ENCODE measurements at regions of chr2 and their contacts with region 1.

Region 1: GRCh38 chr2:152717228-152718075 is at the start of gene PRPF40A:
- DNase-seq: peak; percentile 99
- ATAC-seq: peak; percentile 74
- H3K4me3 ChIP-seq: peak within 1 kb of the TSS; percentile 72 to 97 (median 93)
- H3K4me3 Mint-ChIP-seq: peak within 1 kb of the TSS; percentile 94
- H3K27ac ChIP-seq: peak within 1 kb of the TSS; percentile 94 to 96
- H3K27ac Mint-ChIP-seq: peak within 1 kb of the TSS; percentile 95
- H3K4me1 ChIP-seq: peaks cover 26 to 30% of the 10 kb centered on the region in 2 donors
- H3K4me1 Mint-ChIP-seq: peaks cover 46% of the 10 kb centered on the region
- H3K27me3 ChIP-seq: no peaks in the 10 kb centered on the region
- H3K27me3 Mint-ChIP-seq: no peaks in the 10 kb centered on the region
- CTCF ChIP-seq: no peak
- total RNA-seq, gene PRPF40A: 115 and 121 TPM in 2 replicates

Region 2: GRCh38 chr2:151261231-151261976 is 1456.0 kb before region 1 on chr2 and contains the start of gene RBM43:
- CTCF ChIA-PET with region 1: no interaction called
- POLR2A ChIA-PET with region 1: interaction called, 3 read pairs
- intact Hi-C with region 1: loop called (anchors 1 kb)
- DNase-seq: peak; percentile 86
- ATAC-seq: peak; percentile 84
- H3K4me3 ChIP-seq: peak within 1 kb of the TSS; percentile 78 to 96 (median 85)
- H3K4me3 Mint-ChIP-seq: peak within 1 kb of the TSS; percentile 94
- H3K27ac ChIP-seq: peak within 1 kb of the TSS; percentile 88 to 91
- H3K27ac Mint-ChIP-seq: peak within 1 kb of the TSS; percentile 87
- H3K4me1 ChIP-seq: peaks cover 11 to 12% of the 10 kb centered on the region in 2 donors
- H3K4me1 Mint-ChIP-seq: peaks cover 23% of the 10 kb centered on the region
- H3K27me3 ChIP-seq: no peaks in the 10 kb centered on the region
- H3K27me3 Mint-ChIP-seq: no peaks in the 10 kb centered on the region
- CTCF ChIP-seq: no peak
- total RNA-seq, gene RBM43: 8.4 and 9.0 TPM in 2 replicates

Region 3: GRCh38 chr2:151437630-151438029 is 1279.8 kb before region 1 on chr2:
- CTCF ChIA-PET with region 1: no interaction called
- POLR2A ChIA-PET with region 1: no interaction called
- intact Hi-C with region 1: no loop called
- DNase-seq: peak; percentile 44
- ATAC-seq: peak; percentile 28
- H3K4me3 ChIP-seq: no peak overlapping the region
- H3K4me3 Mint-ChIP-seq: no peak overlapping the region
- H3K27ac ChIP-seq: no peak overlapping the region
- H3K27ac Mint-ChIP-seq: peak overlapping the region; percentile 1
- H3K4me1 ChIP-seq: no peaks in the 10 kb centered on the region
- H3K4me1 Mint-ChIP-seq: no peaks in the 10 kb centered on the region
- H3K27me3 ChIP-seq: no peaks in the 10 kb centered on the region
- H3K27me3 Mint-ChIP-seq: no peaks in the 10 kb centered on the region
- CTCF ChIP-seq: peak; percentile 86

Region 4: DNA sequence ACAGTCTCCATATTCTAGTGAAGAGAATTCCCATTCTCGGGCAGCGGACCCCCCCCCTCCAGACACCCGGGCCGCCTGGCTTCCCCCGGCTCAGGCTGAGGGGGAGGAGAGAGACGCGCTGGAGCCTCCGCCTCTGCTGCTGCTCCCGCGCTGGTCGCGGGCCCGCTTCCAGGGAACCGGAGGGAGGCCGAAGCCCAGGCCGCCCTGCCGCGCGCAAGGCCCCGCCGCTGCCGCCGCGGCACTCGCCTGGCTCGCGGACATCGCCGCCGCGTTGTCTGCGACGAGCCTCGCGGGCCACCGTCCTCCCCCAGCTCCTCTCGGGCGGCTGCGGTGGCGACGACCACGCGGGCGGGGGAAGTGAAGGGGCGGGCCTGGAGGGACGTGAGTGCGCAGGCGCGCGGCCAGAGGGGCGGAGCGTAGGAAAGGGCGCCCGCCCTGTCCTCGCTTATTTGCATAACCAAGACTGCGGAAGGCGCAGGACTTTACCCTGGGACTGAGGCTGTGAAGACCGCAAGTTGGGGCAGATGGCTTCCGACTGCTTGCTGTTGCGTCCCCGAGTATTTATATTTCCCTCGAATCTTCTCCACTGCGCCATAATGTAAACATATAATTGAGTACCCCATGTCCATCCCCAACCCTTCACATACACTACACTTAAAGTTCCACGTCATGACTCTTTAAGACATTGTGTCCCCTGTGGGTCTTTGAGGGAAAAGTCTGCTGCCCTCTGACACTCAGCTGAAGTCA is 889.1 kb before region 1 on chr2 and contains the start of gene ARL5A:
- CTCF ChIA-PET with region 1: no interaction called
- POLR2A ChIA-PET with region 1: interaction called, 6 read pairs
- intact Hi-C with region 1: loop called (anchors 1 kb)
- DNase-seq: peak; percentile 99
- ATAC-seq: peak; percentile 93
- H3K4me3 ChIP-seq: peak within 1 kb of the TSS; percentile 69 to 98 (median 94)
- H3K4me3 Mint-ChIP-seq: peak within 1 kb of the TSS; percentile 86
- H3K27ac ChIP-seq: peak within 1 kb of the TSS; percentile 76 to 87
- H3K27ac Mint-ChIP-seq: peak within 1 kb of the TSS; percentile 93
- H3K4me1 ChIP-seq: peaks cover 20 to 29% of the 10 kb centered on the region in 2 donors
- H3K4me1 Mint-ChIP-seq: peaks cover 51% of the 10 kb centered on the region
- H3K27me3 ChIP-seq: no peaks in the 10 kb centered on the region
- H3K27me3 Mint-ChIP-seq: no peaks in the 10 kb centered on the region
- CTCF ChIP-seq: no peak
- total RNA-seq, gene ARL5A: 54.1 and 60.5 TPM in 2 replicates

Region 5: GRCh38 chr2:152175458-152176325 is 541.8 kb before region 1 on chr2 and contains the start of gene STAM2:
- CTCF ChIA-PET with region 1: interaction called, 6 read pairs
- POLR2A ChIA-PET with region 1: interaction called, 10 read pairs
- intact Hi-C with region 1: loop called (anchors 1 kb)
- DNase-seq: peak; percentile 96
- ATAC-seq: peak; percentile 84
- H3K4me3 ChIP-seq: peak within 1 kb of the TSS; percentile 95 to 99 (median 97)
- H3K4me3 Mint-ChIP-seq: peak within 1 kb of the TSS; percentile 95
- H3K27ac ChIP-seq: peak within 1 kb of the TSS; percentile 95 to 99
- H3K27ac Mint-ChIP-seq: peak within 1 kb of the TSS; percentile 100
- H3K4me1 ChIP-seq: peaks cover 17 to 26% of the 10 kb centered on the region in 2 donors
- H3K4me1 Mint-ChIP-seq: peaks cover 32% of the 10 kb centered on the region
- H3K27me3 ChIP-seq: no peaks in the 10 kb centered on the region
- H3K27me3 Mint-ChIP-seq: peaks cover 2% of the 10 kb centered on the region
- CTCF ChIP-seq: peak; percentile 98
- total RNA-seq, gene STAM2: 24.6 and 30.2 TPM in 2 replicates

Region 6: GRCh38 chr2:152466980-152467676 is 250.3 kb before region 1 on chr2:
- CTCF ChIA-PET with region 1: no interaction called
- POLR2A ChIA-PET with region 1: no interaction called
- intact Hi-C with region 1: no loop called
- DNase-seq: peak; percentile 47
- ATAC-seq: peak; percentile 86
- H3K4me3 ChIP-seq: peak overlapping the region in 2 of 5 experiments; percentile 5 to 10
- H3K4me3 Mint-ChIP-seq: peak overlapping the region; percentile 69
- H3K27ac ChIP-seq: peak overlapping the region in 1 of 2 donors; percentile 31
- H3K27ac Mint-ChIP-seq: peak overlapping the region; percentile 85
- H3K4me1 ChIP-seq: peaks cover 28 to 39% of the 10 kb centered on the region in 2 donors
- H3K4me1 Mint-ChIP-seq: peaks cover 53% of the 10 kb centered on the region
- H3K27me3 ChIP-seq: no peaks in the 10 kb centered on the region
- H3K27me3 Mint-ChIP-seq: no peaks in the 10 kb centered on the region
- CTCF ChIP-seq: no peak

Region 7: DNA sequence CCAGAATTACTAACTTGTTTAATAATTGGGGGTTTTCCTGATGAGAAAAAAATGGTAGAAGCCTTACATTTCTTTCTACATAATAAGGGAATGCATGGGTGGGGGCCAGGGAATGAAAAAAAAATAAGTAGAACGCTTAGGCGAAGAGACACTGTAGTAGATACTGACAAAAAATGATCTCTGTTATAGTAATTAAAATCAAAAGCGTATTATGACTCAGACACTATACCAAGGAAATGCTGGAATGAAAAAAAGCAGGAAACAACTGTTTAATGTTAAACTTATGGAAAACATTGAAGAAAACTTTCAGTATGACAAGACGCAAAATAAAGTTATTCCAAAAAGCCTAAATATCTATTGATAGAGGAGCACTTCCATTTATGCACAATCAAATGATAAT is 43.1 kb before region 1 on chr2:
- CTCF ChIA-PET with region 1: no interaction called
- POLR2A ChIA-PET with region 1: no interaction called
- intact Hi-C with region 1: loop called (anchors 5 kb)
- DNase-seq: no peak
- ATAC-seq: no peak
- H3K4me3 ChIP-seq: no peak overlapping the region
- H3K4me3 Mint-ChIP-seq: no peak overlapping the region
- H3K27ac ChIP-seq: no peak overlapping the region
- H3K27ac Mint-ChIP-seq: no peak overlapping the region
- H3K4me1 ChIP-seq: no peaks in the 10 kb centered on the region
- H3K4me1 Mint-ChIP-seq: no peaks in the 10 kb centered on the region
- H3K27me3 ChIP-seq: no peaks in the 10 kb centered on the region
- H3K27me3 Mint-ChIP-seq: no peaks in the 10 kb centered on the region
- CTCF ChIP-seq: no peak

Region 8: DNA sequence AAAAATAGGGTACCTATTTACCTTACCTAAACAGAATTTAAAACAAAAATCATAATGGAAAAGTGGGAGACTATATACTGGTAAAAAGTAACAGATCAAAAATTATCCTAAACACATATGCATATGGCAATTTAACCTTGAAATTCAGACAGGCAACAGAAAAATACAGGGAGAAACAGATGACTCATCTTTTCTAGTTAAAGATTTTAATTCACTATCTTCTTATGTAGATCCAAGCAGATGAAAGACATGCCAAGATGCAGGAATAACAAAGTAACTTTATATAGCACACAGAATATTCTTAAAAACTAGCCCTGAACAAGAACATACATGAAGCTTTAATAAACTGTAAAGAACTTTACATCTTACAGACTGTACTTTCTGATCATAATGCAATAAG is 31.1 kb before region 1 on chr2:
- CTCF ChIA-PET with region 1: no interaction called
- POLR2A ChIA-PET with region 1: no interaction called
- intact Hi-C with region 1: no loop called
- DNase-seq: no peak
- ATAC-seq: no peak
- H3K4me3 ChIP-seq: no peak overlapping the region
- H3K4me3 Mint-ChIP-seq: no peak overlapping the region
- H3K27ac ChIP-seq: no peak overlapping the region
- H3K27ac Mint-ChIP-seq: no peak overlapping the region
- H3K4me1 ChIP-seq: no peaks in the 10 kb centered on the region
- H3K4me1 Mint-ChIP-seq: peaks cover 2% of the 10 kb centered on the region
- H3K27me3 ChIP-seq: no peaks in the 10 kb centered on the region
- H3K27me3 Mint-ChIP-seq: no peaks in the 10 kb centered on the region
- CTCF ChIP-seq: no peak

Region 9: DNA sequence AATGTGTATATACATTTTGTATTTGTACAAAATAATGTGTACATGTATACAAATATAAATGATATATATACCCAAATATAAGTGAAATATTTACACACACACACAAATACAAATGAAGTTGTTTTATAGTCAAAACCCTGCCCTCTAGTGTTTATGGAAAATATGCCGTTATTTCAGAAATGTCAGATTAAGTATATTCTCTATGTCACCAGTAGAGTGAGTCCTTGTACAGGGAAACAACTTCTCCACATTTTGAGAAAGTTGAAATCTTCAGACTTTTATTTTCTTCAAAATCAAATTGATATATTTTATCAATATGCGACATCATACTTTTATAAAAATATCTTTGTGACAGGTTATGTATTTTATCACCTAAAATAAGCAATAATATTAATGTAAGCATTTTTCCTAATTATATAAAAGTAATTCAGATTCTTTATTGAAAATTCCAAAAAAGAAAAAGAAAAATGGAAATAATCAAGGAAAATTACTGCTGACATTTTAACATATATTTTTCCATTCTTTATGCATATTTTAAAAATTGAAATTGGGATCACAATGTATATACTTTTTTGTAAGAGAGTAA is 23.4 kb after region 1 on chr2:
- CTCF ChIA-PET with region 1: interaction called, 3 read pairs
- POLR2A ChIA-PET with region 1: no interaction called
- intact Hi-C with region 1: loop called (anchors 1 kb)
- DNase-seq: peak; percentile 56
- ATAC-seq: peak; percentile 72
- H3K4me3 ChIP-seq: no peak overlapping the region
- H3K4me3 Mint-ChIP-seq: no peak overlapping the region
- H3K27ac ChIP-seq: no peak overlapping the region
- H3K27ac Mint-ChIP-seq: no peak overlapping the region
- H3K4me1 ChIP-seq: no peaks in the 10 kb centered on the region
- H3K4me1 Mint-ChIP-seq: no peaks in the 10 kb centered on the region
- H3K27me3 ChIP-seq: no peaks in the 10 kb centered on the region
- H3K27me3 Mint-ChIP-seq: no peaks in the 10 kb centered on the region
- CTCF ChIP-seq: peak; percentile 97